Aorta (tissue), 5 donors: ENCODE measurements at regions of chr13 and their contacts with region 1.

Region 1: GRCh38 chr13:40666045-40666904 is at the start of gene FOXO1:
- DNase-seq: peak; percentile 93 to 95
- ATAC-seq: peak; percentile 91
- H3K4me3 ChIP-seq: peak within 1 kb of the TSS; percentile 81 to 90
- H3K27ac ChIP-seq: peak within 1 kb of the TSS; percentile 89 to 93
- H3K4me1 ChIP-seq: no peaks in the 10 kb centered on the region
- H3K27me3 ChIP-seq: no peaks in the 10 kb centered on the region
- total RNA-seq, gene FOXO1: 30.4 to 33.4 TPM

Region 2: DNA sequence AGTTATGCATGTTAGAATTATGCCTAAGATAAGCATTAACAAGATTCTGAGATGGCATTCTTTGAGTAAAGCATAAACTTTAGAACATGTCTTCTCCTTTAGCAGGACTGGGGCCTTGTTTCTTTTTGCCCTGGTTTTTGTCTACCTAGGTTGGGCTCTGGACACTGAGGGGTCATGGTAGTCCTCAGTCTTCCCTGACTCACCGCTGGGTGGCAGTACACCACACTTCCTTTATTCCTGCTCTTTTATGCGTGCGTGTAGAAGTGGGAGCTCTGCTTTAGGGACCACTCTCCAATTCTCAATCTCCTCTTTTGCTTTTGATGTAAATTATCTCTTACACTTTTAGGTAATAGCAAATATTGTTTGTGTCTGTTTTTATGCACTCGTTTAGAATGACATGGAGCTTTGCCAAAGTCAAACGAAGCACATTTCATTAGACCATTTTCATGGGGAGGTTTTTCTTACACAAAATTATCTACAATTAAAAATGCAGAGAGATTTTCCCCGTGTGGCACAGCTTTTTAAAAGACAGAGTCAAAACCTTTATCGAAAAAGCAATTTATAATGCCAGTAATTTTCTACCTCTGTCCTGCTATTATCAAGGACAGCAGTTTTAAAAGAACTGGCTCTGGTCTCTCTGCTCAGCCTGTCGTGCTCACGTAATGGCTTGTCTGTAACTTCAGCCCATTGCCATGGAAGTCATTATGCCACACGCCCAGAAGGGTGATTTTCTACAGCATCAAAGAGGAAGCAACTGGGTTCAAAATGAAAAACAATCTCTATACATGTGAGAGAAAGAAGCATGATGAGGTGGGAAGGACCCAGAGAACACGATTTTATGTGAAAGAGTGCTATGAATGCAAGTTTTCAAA is 596.9 kb before region 1 on chr13:
- intact Hi-C with region 1: loop called in 1 of 2 experiments (anchors 5 kb)
- DNase-seq: peak; percentile 83 to 87
- ATAC-seq: peak; percentile 94
- H3K4me3 ChIP-seq: peak overlapping the region in 1 of 2 donors; percentile 31
- H3K27ac ChIP-seq: no peak overlapping the region
- H3K4me1 ChIP-seq: no peaks in the 10 kb centered on the region
- H3K27me3 ChIP-seq: no peaks in the 10 kb centered on the region

Region 3: DNA sequence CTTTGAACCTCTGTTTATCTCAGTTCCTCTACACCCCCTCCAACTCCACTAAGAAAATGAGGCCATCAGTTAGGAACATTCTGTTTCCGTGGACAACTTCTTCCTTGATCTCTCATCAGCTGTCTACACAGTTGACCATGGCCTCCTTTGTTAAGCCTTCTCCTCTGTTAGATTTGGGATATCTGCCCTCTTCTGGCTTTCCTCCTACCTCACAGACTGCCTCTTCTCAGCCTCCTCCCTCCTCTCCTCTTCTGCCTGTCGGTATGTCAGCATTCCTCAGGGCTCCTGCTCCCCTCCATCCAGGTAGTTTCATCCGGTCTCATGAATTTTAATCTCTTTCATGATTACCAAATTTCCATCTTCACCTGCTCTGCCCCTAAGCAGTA is 454.7 kb before region 1 on chr13:
- intact Hi-C with region 1: loop called in 1 of 2 experiments (anchors 10 kb)
- DNase-seq: no peak
- ATAC-seq: no peak
- H3K4me3 ChIP-seq: no peak overlapping the region
- H3K27ac ChIP-seq: no peak overlapping the region
- H3K4me1 ChIP-seq: peaks cover 0 to 3% of the 10 kb centered on the region in 2 donors
- H3K27me3 ChIP-seq: no peaks in the 10 kb centered on the region

Region 4: GRCh38 chr13:40230833-40231266 is 435.4 kb before region 1 on chr13:
- intact Hi-C with region 1: loop called in 1 of 2 experiments (anchors 10 kb)
- DNase-seq: no peak
- ATAC-seq: no peak
- H3K4me3 ChIP-seq: no peak overlapping the region
- H3K27ac ChIP-seq: no peak overlapping the region
- H3K4me1 ChIP-seq: peaks cover 0 to 1% of the 10 kb centered on the region in 2 donors
- H3K27me3 ChIP-seq: no peaks in the 10 kb centered on the region

Region 5: DNA sequence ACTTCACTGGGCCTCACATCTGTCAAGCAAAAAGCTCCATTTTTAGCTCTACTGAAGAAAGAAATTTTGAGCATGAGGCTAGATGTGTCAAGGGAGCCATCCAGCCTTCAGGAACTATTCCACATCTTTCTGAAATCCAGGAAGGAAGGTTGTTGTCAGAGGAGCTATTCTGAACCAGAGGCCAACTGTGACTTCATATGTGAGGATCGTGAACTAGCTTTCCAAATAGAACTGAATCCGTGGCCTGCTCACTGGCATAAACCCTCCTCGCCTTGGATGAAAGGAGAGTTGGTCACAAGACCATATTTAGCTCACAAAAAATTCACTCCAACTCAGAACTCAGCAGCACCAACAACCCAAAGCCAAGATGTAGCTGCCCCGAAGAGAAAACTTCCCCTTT is 195.6 kb before region 1 on chr13:
- intact Hi-C with region 1: loop called (anchors 5 to 10 kb)
- DNase-seq: no peak
- ATAC-seq: peak; percentile 92
- H3K4me3 ChIP-seq: no peak overlapping the region
- H3K27ac ChIP-seq: peak overlapping the region; percentile 70 to 92
- H3K4me1 ChIP-seq: peaks cover 0 to 3% of the 10 kb centered on the region in 2 donors
- H3K27me3 ChIP-seq: no peaks in the 10 kb centered on the region

Region 6: DNA sequence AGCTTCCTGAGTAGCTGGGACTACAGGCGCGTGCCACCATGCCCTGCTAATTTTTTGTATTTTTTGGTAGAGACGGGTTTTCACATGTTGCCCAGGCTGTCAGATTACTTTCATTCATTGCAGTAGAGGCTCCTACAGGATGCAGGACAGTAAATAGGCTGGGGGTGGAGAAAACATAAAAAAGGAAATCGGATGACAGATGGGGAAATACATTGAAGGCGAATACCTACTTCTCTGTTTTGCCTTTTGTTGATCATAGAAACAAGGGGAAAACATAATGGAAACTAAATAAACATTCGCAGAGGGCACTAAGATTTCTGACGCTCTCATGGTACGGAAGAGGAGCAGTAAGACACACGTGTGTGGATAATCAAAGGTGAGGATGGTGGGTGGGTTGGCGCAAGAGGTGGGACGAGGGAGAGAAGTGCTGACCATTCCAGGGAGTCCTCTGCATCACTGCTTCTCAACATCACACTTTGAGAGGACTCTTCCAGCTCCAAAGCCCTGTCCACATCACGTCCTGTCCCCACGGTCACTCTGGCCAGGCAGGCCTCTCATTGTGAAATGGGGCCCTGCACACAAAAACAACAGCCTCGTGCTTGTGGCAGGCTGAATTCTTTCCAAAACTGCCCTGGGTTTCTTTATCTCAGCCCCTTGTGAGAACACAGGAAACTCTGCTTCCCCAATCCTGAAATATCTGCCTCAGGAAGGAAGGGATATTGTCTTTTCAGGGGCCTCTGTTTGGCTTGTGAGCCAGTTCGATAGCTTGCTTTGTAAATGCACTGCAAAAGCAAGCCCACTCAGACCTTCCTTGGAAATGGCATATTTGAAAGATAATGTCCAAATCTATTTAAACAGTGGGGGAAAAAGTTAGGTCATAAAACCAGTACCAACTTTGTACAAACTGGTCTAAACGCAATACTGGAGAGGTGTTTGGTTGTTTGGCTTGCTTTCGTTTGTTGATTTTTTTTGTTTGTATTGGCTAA is 188.4 kb before region 1 on chr13:
- intact Hi-C with region 1: loop called (anchors 5 to 10 kb)
- DNase-seq: peak in 1 of 2 donors; percentile 69
- ATAC-seq: peak; percentile 61
- H3K4me3 ChIP-seq: no peak overlapping the region
- H3K27ac ChIP-seq: peak overlapping the region; percentile 32 to 77
- H3K4me1 ChIP-seq: no peaks in the 10 kb centered on the region
- H3K27me3 ChIP-seq: no peaks in the 10 kb centered on the region

Region 7: GRCh38 chr13:40596484-40596883 is 69.8 kb before region 1 on chr13:
- intact Hi-C with region 1: loop called in 1 of 2 experiments (anchors 5 kb)
- DNase-seq: no peak
- ATAC-seq: no peak
- H3K4me3 ChIP-seq: no peak overlapping the region
- H3K27ac ChIP-seq: no peak overlapping the region
- H3K4me1 ChIP-seq: peaks cover 3 to 4% of the 10 kb centered on the region in 2 donors
- H3K27me3 ChIP-seq: no peaks in the 10 kb centered on the region